Endothelial cell of umbilical vein (primary cell): ENCODE measurements at regions of chr12 and their contacts with region 1.

Region 1: DNA sequence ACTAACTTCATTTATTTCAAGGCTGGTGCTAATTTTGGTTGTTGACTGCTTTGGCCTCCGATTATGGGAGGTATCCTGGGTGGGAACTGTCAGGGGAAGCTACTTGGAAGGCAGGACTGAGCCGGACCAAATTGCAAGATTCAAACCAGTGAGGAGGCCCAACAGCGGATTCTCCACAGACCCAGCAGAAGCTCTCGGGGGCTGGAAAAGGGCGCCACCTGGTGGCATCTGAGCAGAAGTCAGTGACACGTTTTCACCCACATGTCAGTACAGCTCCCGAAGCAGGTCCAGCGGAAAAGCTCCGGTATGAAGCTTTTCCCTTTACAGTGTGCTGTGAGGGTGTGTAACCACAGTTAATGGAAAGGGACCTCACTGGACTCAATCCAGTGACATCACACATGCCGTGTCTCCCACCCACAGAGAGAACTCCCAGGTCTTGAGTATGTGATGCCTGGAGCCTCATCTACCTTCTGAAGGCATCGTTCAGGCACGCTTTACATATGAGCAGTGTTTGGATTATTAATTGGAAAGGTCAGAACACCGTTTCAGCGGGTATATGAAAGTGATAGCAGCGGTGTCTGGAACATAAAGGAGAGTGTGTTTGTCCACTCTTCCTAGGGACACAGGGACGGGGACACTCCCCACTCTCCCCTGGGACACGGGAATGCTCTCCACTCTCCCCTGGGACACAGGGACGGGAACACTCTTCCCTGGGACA is 3.6 kb upstream of the P2RX2 start:
- DNase-seq: peak; percentile 81
- H3K4me3 ChIP-seq: no peak overlapping the region
- H3K27ac ChIP-seq: no peak overlapping the region
- H3K4me1 ChIP-seq: no peaks in the 10 kb centered on the region
- H3K27me3 ChIP-seq: peaks cover 28 to 38% of the 10 kb centered on the region in 2 experiments
- CTCF ChIP-seq: peak; percentile 89 to 93
- POLR2A ChIP-seq: no peak

Region 2: DNA sequence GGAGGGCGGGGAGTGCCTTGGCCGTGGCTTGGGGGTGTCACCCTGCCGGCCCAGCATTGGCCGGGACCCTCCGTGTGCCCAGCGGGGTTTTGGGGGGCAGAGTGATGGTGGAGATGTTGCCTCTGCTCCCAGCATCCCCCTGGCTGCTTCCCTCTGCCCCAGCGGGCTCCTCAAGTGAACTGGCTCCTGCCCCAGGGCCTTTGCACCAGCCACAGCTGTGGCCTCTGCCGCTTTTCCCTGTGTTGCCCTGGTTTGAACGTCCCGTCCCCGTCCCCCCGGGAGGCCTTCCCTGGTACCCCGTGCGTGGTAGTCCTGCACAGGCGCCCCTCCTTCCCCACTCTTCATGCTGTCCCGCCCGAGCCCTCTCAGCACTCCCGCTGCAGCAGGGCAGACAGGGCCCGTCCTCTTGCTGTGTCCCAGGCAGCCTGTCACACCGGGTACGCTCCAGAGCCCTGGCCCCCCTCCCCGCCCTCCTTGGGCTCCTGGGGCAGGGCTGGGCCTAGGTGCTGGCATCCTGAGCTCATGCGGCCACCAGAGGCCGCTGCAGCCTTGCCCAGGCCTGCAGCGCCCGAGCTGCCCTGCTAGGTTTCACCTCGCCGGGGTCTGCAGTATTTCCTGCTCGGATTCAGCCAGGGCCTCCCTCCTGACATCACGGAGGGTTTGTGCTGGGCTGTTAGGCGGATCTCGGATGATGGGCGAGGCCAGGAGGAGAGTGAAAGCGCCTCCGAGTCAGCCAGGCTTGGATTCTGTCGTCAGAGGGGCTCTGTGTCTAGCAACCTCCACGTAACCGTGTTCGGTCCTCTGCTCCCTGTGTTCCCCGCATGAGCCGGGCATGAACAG is 461.3 kb before region 1 on chr12:
- CTCF ChIA-PET with region 1: interaction called, 21 read pairs
- POLR2A ChIA-PET with region 1: no interaction called
- dilution Hi-C with region 1: no loop called
- intact Hi-C with region 1: no loop called
- DNase-seq: peak; percentile 53
- H3K4me3 ChIP-seq: no peak overlapping the region
- H3K27ac ChIP-seq: no peak overlapping the region
- H3K4me1 ChIP-seq: no peaks in the 10 kb centered on the region
- H3K27me3 ChIP-seq: no peaks in the 10 kb centered on the region
- CTCF ChIP-seq: peak; percentile 89 to 98
- POLR2A ChIP-seq: no peak

Region 3: GRCh38 chr12:132429946-132430643 is 184.9 kb before region 1 on chr12:
- CTCF ChIA-PET with region 1: interaction called, 11 read pairs
- POLR2A ChIA-PET with region 1: no interaction called
- dilution Hi-C with region 1: no loop called
- intact Hi-C with region 1: no loop called
- DNase-seq: no peak
- H3K4me3 ChIP-seq: no peak overlapping the region
- H3K27ac ChIP-seq: no peak overlapping the region
- H3K4me1 ChIP-seq: no peaks in the 10 kb centered on the region
- H3K27me3 ChIP-seq: peaks cover 0 to 1% of the 10 kb centered on the region in 2 experiments
- CTCF ChIP-seq: no peak
- POLR2A ChIP-seq: no peak

Region 4: DNA sequence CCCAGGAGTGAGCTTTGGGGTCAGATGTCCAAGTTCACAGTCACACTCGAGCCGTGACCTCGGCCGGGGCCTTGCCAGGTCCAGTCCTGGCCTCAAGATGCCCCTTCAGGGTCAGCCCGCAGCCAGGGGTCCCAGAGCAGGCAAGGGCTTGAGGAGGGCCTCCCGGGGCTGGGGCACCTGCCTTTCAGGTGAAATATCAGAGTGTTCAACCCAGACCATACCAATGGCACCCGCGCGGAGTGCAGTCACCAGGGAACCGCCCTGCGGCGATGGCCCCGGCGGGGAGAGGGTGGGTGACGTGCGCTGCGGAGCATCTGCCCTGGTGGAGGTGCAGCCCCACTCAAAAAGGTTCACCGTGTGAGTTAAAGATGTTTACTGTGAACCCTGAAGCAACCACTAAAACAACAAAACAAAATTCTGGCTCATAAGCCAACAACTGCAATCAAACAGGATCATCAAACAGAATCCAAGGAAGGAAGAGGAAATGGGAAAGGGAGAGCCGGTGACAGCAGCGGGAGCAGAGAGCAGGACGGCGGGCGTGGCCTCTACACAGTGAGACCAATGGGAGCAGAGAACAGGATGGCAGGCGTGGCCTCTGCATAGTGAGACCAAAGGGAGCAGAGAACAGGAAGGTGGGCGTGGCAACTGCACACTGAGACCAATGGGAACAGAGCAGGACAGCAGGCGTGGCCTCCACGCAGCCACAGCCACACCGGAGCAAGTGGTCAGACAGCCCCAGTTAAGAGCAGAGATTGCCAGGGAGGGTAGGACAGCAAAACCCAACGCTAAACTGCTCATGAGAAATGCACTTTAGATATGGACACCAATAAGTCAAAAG is 21.3 kb before region 1 on chr12:
- CTCF ChIA-PET with region 1: interaction called, 102 read pairs
- POLR2A ChIA-PET with region 1: no interaction called
- dilution Hi-C with region 1: no loop called
- intact Hi-C with region 1: no loop called
- DNase-seq: peak; percentile 97
- H3K4me3 ChIP-seq: no peak overlapping the region
- H3K27ac ChIP-seq: no peak overlapping the region
- H3K4me1 ChIP-seq: peaks cover 2% of the 10 kb centered on the region
- H3K27me3 ChIP-seq: no peaks in the 10 kb centered on the region
- CTCF ChIP-seq: no peak
- POLR2A ChIP-seq: no peak

Region 5: DNA sequence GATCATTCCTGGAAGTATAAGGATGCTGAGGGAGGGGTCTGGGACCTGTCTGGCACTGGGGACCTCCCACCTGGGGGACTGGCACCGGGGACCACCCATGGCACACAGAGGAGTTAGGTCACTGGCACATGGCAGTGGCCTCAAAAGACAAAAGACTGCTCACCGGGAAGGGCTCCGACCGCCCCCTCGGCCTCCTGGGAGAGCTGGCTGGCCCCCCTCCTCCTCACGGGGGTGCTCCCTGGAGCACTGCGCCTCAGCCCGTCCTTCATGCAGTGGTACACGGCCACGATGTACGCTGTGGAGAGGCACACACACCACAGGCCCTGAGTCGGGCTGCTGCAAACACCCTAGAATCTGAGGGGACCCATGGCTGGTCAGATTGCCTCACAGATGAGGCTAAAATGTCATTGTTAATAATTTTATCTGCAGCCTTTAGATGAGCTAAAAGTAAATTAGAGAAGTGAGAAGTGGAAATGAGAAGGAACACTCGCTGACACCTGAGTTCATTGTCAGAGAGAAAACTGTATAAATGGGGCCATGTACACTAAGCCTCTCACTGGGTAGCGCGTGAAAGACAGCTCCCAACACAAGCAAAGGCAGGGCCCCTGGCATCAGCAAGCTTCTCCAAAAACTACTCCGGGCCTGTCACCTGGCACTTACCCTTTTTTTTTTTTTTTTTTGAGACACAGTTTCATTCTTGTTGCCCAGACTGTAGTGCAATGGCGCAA is 17.6 kb after region 1 on chr12:
- CTCF ChIA-PET with region 1: interaction called, 12 read pairs
- POLR2A ChIA-PET with region 1: no interaction called
- dilution Hi-C with region 1: no loop called
- intact Hi-C with region 1: no loop called
- DNase-seq: no peak
- H3K4me3 ChIP-seq: no peak overlapping the region
- H3K27ac ChIP-seq: no peak overlapping the region
- H3K4me1 ChIP-seq: no peaks in the 10 kb centered on the region
- H3K27me3 ChIP-seq: no peaks in the 10 kb centered on the region
- CTCF ChIP-seq: no peak
- POLR2A ChIP-seq: no peak

Region 6: GRCh38 chr12:132748319-132748718 is 133.3 kb after region 1 on chr12:
- CTCF ChIA-PET with region 1: no interaction called
- POLR2A ChIA-PET with region 1: no interaction called
- dilution Hi-C with region 1: no loop called
- intact Hi-C with region 1: no loop called
- DNase-seq: no peak
- H3K4me3 ChIP-seq: no peak overlapping the region
- H3K27ac ChIP-seq: no peak overlapping the region
- H3K4me1 ChIP-seq: no peaks in the 10 kb centered on the region
- H3K27me3 ChIP-seq: no peaks in the 10 kb centered on the region
- CTCF ChIP-seq: no peak
- POLR2A ChIP-seq: no peak